ENCODE measurements at regions of chr15 and their contacts with region 1.

Region 1: GRCh38 chr15:80776420-80777045 is 2.6 kb upstream of the CEMIP start:
- DNase-seq: peak; percentile 58 to 79 (median 74)
- ATAC-seq: peak; percentile 19 to 32
- H3K4me3 ChIP-seq: no peak overlapping the region
- H3K27ac ChIP-seq: peak overlapping the region; percentile 59
- H3K4me1 ChIP-seq: peaks cover 6% of the 10 kb centered on the region
- H3K27me3 ChIP-seq: no peaks in the 10 kb centered on the region

Region 2: GRCh38 chr15:80455668-80456442 is 320.7 kb before region 1 on chr15:
- intact Hi-C with region 1: loop called (anchors 2 to 10 kb)
- DNase-seq: peak in 2 of 3 donors; percentile 40 to 69
- ATAC-seq: peak; percentile 51 to 70
- H3K4me3 ChIP-seq: no peak overlapping the region
- H3K27ac ChIP-seq: no peak overlapping the region
- H3K4me1 ChIP-seq: no peaks in the 10 kb centered on the region
- H3K27me3 ChIP-seq: no peaks in the 10 kb centered on the region

Region 3: GRCh38 chr15:80567721-80568157 is 208.8 kb before region 1 on chr15:
- intact Hi-C with region 1: loop called (anchors 5 to 10 kb)
- DNase-seq: peak in 1 of 3 donors; percentile 65
- ATAC-seq: peak; percentile 83 to 84
- H3K4me3 ChIP-seq: no peak overlapping the region
- H3K27ac ChIP-seq: no peak overlapping the region
- H3K4me1 ChIP-seq: no peaks in the 10 kb centered on the region
- H3K27me3 ChIP-seq: no peaks in the 10 kb centered on the region

Region 4: DNA sequence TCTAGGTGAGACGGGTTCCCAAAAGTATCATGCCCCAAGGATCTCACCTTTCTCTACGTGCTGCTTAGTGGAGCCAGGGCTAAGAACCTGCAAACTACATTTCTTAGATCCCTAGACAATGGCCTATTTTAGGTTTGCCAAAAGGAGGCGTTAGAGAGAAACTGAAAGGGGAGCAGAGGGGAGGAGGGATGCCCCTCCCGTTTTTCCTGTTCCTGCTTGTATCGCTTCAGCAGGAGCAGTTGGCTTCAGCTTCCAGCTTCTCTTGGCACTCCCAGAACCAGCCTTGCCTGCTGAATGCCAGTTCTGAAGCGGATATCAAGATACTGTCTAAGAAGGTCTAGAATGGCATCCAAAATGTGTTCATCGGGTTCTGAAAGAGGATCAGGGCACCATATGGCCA is 139.9 kb before region 1 on chr15:
- intact Hi-C with region 1: loop called in 1 of 4 experiments (anchors 10 kb)
- DNase-seq: peak in 1 of 3 donors; percentile 58
- ATAC-seq: peak; percentile 49 to 57
- H3K4me3 ChIP-seq: no peak overlapping the region
- H3K27ac ChIP-seq: no peak overlapping the region
- H3K4me1 ChIP-seq: no peaks in the 10 kb centered on the region
- H3K27me3 ChIP-seq: no peaks in the 10 kb centered on the region

Region 5: GRCh38 chr15:80970018-80970658 is 193.6 kb after region 1 on chr15:
- intact Hi-C with region 1: loop called in 3 of 4 experiments (anchors 2 to 10 kb)
- DNase-seq: peak; percentile 35 to 68 (median 63)
- ATAC-seq: peak; percentile 61 to 70
- H3K4me3 ChIP-seq: no peak overlapping the region
- H3K27ac ChIP-seq: no peak overlapping the region
- H3K4me1 ChIP-seq: no peaks in the 10 kb centered on the region
- H3K27me3 ChIP-seq: no peaks in the 10 kb centered on the region

Measured in right cardiac atrium (tissue), 5 donors.